ENCODE measurements at regions of chr15 and their contacts with region 1.

Region 1: DNA sequence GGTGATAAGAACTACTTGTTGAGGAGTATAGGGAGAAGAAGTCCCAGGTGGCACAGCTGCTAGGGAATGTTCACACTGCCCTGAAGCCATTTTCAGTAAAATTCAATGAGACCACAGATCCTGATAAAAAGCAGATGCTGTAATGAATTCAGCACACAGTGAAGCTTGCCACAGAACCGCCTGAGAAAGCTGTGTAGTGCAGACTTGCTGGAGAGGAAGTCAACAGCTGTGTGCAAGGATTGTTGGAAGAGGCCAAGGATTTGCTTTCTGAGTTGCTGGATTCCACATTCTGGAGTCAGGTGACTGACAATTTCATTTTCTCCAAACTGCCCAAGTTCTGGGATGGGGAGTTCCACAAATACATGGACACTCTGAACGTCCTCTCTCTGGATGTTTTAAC is 70.9 kb downstream of the ANP32A start:
- DNase-seq: no peak

Region 2: DNA sequence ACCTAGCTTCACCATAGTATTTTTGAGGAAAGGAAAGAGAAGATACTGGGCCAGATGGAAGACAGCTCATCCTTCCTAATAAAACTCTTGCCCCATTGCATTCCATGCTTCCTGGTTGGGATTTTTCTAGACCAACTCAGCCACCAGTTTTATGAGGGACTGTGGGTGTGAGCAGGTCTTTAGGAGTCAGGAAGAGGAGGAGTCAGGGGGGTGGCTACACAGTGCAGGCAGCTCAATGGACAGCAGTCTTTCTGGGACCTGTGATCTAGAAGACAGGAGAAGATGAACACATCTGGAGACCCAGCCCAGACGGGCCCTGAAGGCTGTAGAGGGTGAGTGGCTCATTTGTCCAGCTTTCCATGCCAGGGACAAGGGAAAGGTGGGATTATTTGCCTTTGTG is 264.7 kb after region 1 on chr15 and contains the start of gene NOX5:
- intact Hi-C with region 1: loop called in 1 of 2 experiments (anchors 10 kb)
- DNase-seq: no peak
- total RNA-seq, gene NOX5: 0.09 to 0.10 TPM